GM12878 (cell line): ENCODE measurements at regions of chr17 and their contacts with region 1.

Region 1: DNA sequence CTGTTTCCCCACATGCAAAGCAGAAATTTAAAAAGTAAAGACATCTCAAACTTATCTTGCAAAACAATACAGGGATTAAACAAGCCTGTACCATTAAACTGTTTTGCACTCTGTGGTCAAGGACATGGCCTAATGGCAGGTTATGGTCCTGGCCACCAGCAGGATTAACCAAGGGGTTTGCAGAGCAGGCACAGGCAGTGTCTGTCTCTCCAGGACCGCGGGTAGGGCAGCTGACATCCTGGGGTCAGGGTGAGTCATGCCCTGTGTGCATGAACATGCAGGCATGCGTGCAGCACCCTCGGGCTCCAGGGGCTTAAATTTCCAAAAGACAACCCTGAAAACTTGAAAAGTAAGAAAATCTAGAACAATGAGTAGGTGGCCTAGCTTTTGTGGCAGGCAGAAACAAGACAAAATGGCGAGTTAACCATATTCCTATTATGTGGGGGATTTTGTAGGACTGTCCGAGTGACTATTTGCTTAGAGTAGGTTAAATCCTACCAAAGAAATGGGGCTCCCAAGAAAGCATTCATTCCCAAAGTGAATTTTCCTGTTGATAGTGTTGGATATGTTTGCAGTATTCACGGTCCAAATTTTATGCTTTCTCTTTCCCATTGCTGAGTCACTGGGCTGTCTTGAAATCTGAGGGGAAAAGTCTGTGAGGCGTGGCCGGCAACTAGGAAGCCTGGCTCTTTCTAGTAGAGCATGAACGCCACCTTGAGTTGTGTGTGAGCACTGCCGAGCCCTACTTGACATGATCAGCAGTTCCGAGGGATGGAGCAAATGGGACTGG is 158.4 kb upstream of the FAM20A start:
- DNase-seq: no peak
- ATAC-seq: peak; percentile 96
- H3K4me3 ChIP-seq: no peak overlapping the region; the same call in 1 of the 2 replicates
- H3K27ac ChIP-seq: no peak overlapping the region; the same call in 1 of the 2 replicates
- H3K4me1 ChIP-seq: no peaks in the 10 kb centered on the region
- H3K27me3 ChIP-seq: no peaks in the 10 kb centered on the region
- CTCF ChIP-seq: peak; percentile 81 to 83 (median 82)
- EP300 ChIP-seq: no peak
- POLR2A ChIP-seq: no peak
- RAD21 ChIP-seq: peak; percentile 76

Region 2: GRCh38 chr17:68255731-68256538 is 503.6 kb before region 1 on chr17:
- CTCF ChIA-PET with region 1: no interaction called
- POLR2A ChIA-PET with region 1: no interaction called
- RAD21 ChIA-PET with region 1: no interaction called
- SMC1A ChIA-PET with region 1: no interaction called
- in situ Hi-C with region 1: loop called (anchors 10 kb)
- intact Hi-C with region 1: no loop called
- DNase-seq: no peak
- ATAC-seq: peak; percentile 57
- H3K4me3 ChIP-seq: no peak overlapping the region
- H3K27ac ChIP-seq: no peak overlapping the region
- H3K4me1 ChIP-seq: peaks cover 7% of the 10 kb centered on the region; the same call in 1 of the 2 replicates
- H3K27me3 ChIP-seq: no peaks in the 10 kb centered on the region
- CTCF ChIP-seq: no peak
- EP300 ChIP-seq: no peak
- POLR2A ChIP-seq: no peak
- RAD21 ChIP-seq: no peak

Region 3: GRCh38 chr17:68539548-68540467 is 219.7 kb before region 1 on chr17:
- CTCF ChIA-PET with region 1: interaction called, 4 read pairs
- POLR2A ChIA-PET with region 1: no interaction called
- RAD21 ChIA-PET with region 1: no interaction called
- SMC1A ChIA-PET with region 1: no interaction called
- in situ Hi-C with region 1: no loop called
- intact Hi-C with region 1: loop called (anchors 5 kb)
- DNase-seq: no peak
- ATAC-seq: peak; percentile 53
- H3K4me3 ChIP-seq: no peak overlapping the region
- H3K27ac ChIP-seq: no peak overlapping the region
- H3K4me1 ChIP-seq: no peaks in the 10 kb centered on the region
- H3K27me3 ChIP-seq: no peaks in the 10 kb centered on the region
- CTCF ChIP-seq: peak in 2 of 3 experiments; percentile 6 to 29; a peak in 3 of 6 replicates
- EP300 ChIP-seq: no peak
- POLR2A ChIP-seq: peak; percentile 6; the same call in 1 of the 2 replicates
- RAD21 ChIP-seq: peak; percentile 33; the same call in 1 of the 2 replicates